CD4-positive, alpha-beta T cell (primary cell): ENCODE measurements at regions of chr10 and their contacts with region 1.

Region 1: GRCh38 chr10:6530211-6530840 is 49.8 kb downstream of the PRKCQ start:
- DNase-seq: peak; percentile 61 to 94 (median 77)
- ATAC-seq: peak; percentile 97
- H3K4me3 ChIP-seq: peak overlapping the region; percentile 48
- H3K4me3 Mint-ChIP-seq: peak overlapping the region; percentile 86
- H3K27ac ChIP-seq: peak overlapping the region; percentile 85 to 86
- H3K27ac Mint-ChIP-seq: peak overlapping the region; percentile 95
- H3K4me1 ChIP-seq: peaks cover 73% of the 10 kb centered on the region
- H3K4me1 Mint-ChIP-seq: peaks cover 85% of the 10 kb centered on the region
- H3K27me3 ChIP-seq: no peaks in the 10 kb centered on the region
- H3K27me3 Mint-ChIP-seq: no peaks in the 10 kb centered on the region
- CTCF ChIP-seq: no peak

Region 2: DNA sequence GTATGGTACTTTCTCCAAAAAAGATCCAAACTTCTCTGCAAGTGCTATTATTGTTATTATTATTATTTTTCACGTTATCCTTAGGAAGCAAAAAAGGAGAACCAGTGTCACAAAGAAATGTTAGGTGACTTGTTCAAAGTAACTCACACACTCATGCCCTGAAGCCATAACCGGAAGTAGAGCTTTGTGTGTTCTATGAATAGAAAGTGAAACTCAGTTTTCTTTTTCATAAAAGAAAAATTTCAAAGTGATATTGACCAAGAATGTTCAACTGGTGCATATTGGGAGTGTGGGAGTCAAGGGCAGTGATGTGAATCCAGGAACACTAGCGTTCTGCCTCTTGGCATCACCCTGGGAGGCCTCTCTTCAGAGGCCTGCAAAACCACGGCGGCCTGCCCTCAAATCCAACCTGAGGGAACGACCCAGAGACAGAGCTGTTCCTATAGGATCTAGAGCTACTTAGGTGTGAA is 56.4 kb before region 1 on chr10:
- CTCF ChIA-PET with region 1: interaction called, 6 read pairs
- POLR2A ChIA-PET with region 1: interaction called, 25 read pairs
- intact Hi-C with region 1: loop called in 1 of 2 experiments (anchors 2 kb)
- DNase-seq: peak in 6 of 14 experiments; percentile 25 to 85 (median 56)
- ATAC-seq: peak; percentile 75
- H3K4me3 ChIP-seq: peak overlapping the region; percentile 47
- H3K4me3 Mint-ChIP-seq: peak overlapping the region; percentile 83
- H3K27ac ChIP-seq: peak overlapping the region; percentile 69 to 75
- H3K27ac Mint-ChIP-seq: peak overlapping the region; percentile 95
- H3K4me1 ChIP-seq: peaks cover 23% of the 10 kb centered on the region
- H3K4me1 Mint-ChIP-seq: peaks cover 65% of the 10 kb centered on the region
- H3K27me3 ChIP-seq: no peaks in the 10 kb centered on the region
- H3K27me3 Mint-ChIP-seq: no peaks in the 10 kb centered on the region
- CTCF ChIP-seq: no peak

Region 3: DNA sequence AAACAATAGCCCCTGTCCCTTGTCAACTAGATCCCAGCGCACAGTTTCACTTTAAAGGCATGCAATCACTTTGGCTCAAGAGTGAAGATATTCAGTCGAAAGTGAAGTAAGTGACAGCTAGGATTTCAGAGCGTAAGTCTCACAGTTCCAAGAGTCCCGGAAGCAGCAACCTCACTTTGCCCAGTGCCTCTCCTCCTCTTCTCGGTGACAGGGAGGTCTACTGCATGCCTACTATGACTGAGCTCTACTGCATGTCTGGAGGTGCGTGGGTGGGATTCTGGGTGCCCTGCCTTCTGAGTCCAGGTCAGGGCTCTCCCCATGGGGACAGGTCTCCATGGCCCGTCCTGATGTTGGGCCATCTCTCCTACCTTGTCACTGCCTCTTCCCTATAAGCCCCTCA is 32.7 kb after region 1 on chr10:
- CTCF ChIA-PET with region 1: no interaction called
- POLR2A ChIA-PET with region 1: interaction called, 25 read pairs
- intact Hi-C with region 1: no loop called
- DNase-seq: peak in 6 of 14 experiments; percentile 13 to 64 (median 50)
- ATAC-seq: peak; percentile 58
- H3K4me3 ChIP-seq: peak overlapping the region; percentile 21
- H3K4me3 Mint-ChIP-seq: peak overlapping the region; percentile 82
- H3K27ac ChIP-seq: peak overlapping the region; percentile 50 to 66
- H3K27ac Mint-ChIP-seq: peak overlapping the region; percentile 81
- H3K4me1 ChIP-seq: peaks cover 71% of the 10 kb centered on the region
- H3K4me1 Mint-ChIP-seq: peaks cover 90% of the 10 kb centered on the region
- H3K27me3 ChIP-seq: no peaks in the 10 kb centered on the region
- H3K27me3 Mint-ChIP-seq: no peaks in the 10 kb centered on the region
- CTCF ChIP-seq: no peak

Region 4: GRCh38 chr10:6593241-6593671 is 62.9 kb after region 1 on chr10:
- CTCF ChIA-PET with region 1: no interaction called
- POLR2A ChIA-PET with region 1: interaction called, 15 read pairs
- intact Hi-C with region 1: no loop called
- DNase-seq: peak in 5 of 14 experiments; percentile 16 to 64 (median 50)
- ATAC-seq: peak; percentile 67
- H3K4me3 ChIP-seq: no peak overlapping the region
- H3K4me3 Mint-ChIP-seq: peak overlapping the region; percentile 66
- H3K27ac ChIP-seq: peak overlapping the region; percentile 79 to 83
- H3K27ac Mint-ChIP-seq: peak overlapping the region; percentile 94
- H3K4me1 ChIP-seq: peaks cover 54% of the 10 kb centered on the region
- H3K4me1 Mint-ChIP-seq: peaks cover 97% of the 10 kb centered on the region
- H3K27me3 ChIP-seq: no peaks in the 10 kb centered on the region
- H3K27me3 Mint-ChIP-seq: no peaks in the 10 kb centered on the region
- CTCF ChIP-seq: no peak

Region 5: DNA sequence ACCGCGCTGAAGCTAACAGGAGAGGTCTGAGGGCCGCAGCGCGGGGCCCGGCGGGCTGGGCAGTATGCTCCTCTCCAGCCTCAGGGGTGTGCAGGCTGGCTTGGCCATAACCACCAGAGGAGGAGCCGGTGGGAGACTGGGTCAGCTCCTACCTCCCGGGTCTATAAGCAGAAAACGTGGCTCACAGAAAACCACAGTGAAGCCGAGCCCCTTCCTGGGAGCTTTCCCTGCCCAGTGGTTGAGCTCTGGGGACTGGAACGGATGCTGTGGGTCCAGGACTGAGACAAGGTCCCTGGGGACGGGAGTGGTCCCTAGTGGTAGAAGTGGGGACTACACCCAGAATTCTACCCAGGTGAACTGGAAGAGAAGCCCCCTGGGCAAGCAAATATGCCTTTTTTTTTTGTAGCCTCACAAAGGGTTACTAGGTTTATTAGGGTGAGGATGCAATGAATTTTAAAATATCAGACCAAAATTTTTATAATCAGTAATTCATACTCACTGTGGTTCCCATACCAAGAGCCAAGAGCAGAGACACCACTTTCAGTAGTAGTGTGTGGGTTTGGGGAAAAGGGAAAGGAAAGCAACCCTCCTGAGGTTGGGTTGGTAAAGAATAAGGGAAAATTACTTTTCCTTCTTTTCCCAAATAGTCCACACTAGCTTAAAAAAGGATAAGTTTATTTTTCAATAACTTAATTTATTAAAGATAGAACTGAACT is 117.6 kb after region 1 on chr10:
- CTCF ChIA-PET with region 1: interaction called, 6 read pairs
- POLR2A ChIA-PET with region 1: no interaction called
- intact Hi-C with region 1: loop called in 1 of 2 experiments (anchors 5 kb)
- DNase-seq: peak; percentile 41 to 82 (median 60)
- ATAC-seq: peak; percentile 97
- H3K4me3 ChIP-seq: no peak overlapping the region
- H3K4me3 Mint-ChIP-seq: no peak overlapping the region
- H3K27ac ChIP-seq: no peak overlapping the region
- H3K27ac Mint-ChIP-seq: no peak overlapping the region
- H3K4me1 ChIP-seq: peaks cover 16% of the 10 kb centered on the region
- H3K4me1 Mint-ChIP-seq: peaks cover 17% of the 10 kb centered on the region
- H3K27me3 ChIP-seq: no peaks in the 10 kb centered on the region
- H3K27me3 Mint-ChIP-seq: no peaks in the 10 kb centered on the region
- CTCF ChIP-seq: peak; percentile 93